A549 (cell line): ENCODE measurements at regions of chrX and their contacts with region 1.

Region 1: DNA sequence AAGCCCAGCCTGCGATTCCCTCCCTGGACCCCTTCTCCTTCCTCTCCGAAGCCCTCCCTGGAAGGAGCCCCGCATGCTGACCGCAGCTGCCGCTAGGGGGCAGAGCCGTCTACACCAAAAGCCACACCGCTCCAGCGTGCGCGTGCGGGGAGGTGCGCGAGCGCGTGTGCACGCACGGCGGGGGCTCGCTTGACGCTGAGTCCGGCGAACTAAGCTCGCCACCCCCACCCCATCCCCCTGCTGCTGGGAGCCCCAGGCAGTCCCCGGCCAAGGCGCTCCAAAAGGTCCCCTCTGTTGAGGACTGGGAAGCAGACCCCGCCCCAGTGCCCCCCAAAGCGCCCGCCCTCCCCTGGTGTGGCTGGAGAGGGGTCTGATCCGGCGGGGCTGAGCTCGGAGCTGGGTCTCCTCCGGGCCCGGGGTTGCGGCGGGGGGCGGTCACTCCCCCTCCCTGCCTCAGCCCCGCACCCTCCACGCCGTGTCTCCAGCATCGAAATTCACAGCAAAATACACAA is 11.0 kb upstream of the CCNQ start:
- DNase-seq: peak; percentile 65 to 74
- ATAC-seq: peak; percentile 90 to 98
- H3K4me3 ChIP-seq: peak overlapping the region; percentile 44
- H3K27ac ChIP-seq: peak overlapping the region; percentile 57 to 89; a peak in 5 of 6 replicates
- H3K4me1 ChIP-seq: peaks cover 6% of the 10 kb centered on the region; the same call in 2 of the 3 replicates
- CTCF ChIP-seq: peak; percentile 69
- EP300 ChIP-seq: no peak
- POLR2A ChIP-seq: no peak
- RAD21 ChIP-seq: peak; percentile 69 to 77

Region 2: DNA sequence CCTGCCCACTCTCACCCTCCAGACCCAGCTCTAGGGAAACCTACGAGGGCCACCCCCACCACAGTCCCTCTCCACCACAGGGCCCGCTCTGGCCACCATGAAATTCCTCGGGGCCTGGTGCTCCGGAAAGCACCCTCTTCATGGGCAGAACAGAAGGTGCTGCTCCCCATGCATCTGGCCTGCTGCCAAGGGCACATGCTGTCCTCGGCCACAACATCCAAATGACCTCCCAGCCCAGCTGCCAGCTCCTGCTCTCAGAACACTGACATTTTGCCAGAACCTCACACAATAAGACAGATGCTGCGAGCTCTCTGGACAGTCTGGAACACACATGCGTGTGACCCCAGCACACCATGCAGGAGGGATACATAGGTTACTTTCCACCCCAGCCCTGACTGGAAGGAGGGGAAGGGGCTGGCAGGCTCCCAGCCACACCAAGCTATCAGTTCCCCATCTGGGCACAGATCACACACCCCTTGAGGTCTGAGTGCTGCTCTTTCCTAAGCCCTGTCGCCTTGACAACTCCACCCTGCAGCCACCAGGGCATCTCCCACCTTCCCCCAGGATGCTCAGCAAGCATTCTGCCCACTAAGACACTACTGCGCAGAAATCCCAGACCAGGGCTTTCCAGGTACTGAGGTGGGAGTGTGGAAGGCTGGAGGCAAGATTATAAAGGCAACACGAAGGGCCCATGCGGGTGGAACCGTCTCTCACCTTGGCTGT is 16.8 kb before region 1 on chrX:
- CTCF ChIA-PET with region 1: interaction called, 10 read pairs
- POLR2A ChIA-PET with region 1: no interaction called
- DNase-seq: no peak
- ATAC-seq: no peak
- H3K4me3 ChIP-seq: no peak overlapping the region
- H3K27ac ChIP-seq: no peak overlapping the region
- H3K4me1 ChIP-seq: peaks cover 11% of the 10 kb centered on the region; the same call in 2 of the 3 replicates
- CTCF ChIP-seq: no peak
- EP300 ChIP-seq: no peak
- POLR2A ChIP-seq: no peak
- RAD21 ChIP-seq: no peak

Region 3: GRCh38 chrX:153627675-153628111 is 17.7 kb after region 1 on chrX:
- CTCF ChIA-PET with region 1: interaction called, 43 read pairs
- POLR2A ChIA-PET with region 1: no interaction called
- DNase-seq: no peak
- ATAC-seq: no peak
- H3K4me3 ChIP-seq: no peak overlapping the region
- H3K27ac ChIP-seq: no peak overlapping the region
- H3K4me1 ChIP-seq: peaks cover 9% of the 10 kb centered on the region
- CTCF ChIP-seq: no peak
- EP300 ChIP-seq: no peak
- POLR2A ChIP-seq: no peak
- RAD21 ChIP-seq: no peak

Region 4: DNA sequence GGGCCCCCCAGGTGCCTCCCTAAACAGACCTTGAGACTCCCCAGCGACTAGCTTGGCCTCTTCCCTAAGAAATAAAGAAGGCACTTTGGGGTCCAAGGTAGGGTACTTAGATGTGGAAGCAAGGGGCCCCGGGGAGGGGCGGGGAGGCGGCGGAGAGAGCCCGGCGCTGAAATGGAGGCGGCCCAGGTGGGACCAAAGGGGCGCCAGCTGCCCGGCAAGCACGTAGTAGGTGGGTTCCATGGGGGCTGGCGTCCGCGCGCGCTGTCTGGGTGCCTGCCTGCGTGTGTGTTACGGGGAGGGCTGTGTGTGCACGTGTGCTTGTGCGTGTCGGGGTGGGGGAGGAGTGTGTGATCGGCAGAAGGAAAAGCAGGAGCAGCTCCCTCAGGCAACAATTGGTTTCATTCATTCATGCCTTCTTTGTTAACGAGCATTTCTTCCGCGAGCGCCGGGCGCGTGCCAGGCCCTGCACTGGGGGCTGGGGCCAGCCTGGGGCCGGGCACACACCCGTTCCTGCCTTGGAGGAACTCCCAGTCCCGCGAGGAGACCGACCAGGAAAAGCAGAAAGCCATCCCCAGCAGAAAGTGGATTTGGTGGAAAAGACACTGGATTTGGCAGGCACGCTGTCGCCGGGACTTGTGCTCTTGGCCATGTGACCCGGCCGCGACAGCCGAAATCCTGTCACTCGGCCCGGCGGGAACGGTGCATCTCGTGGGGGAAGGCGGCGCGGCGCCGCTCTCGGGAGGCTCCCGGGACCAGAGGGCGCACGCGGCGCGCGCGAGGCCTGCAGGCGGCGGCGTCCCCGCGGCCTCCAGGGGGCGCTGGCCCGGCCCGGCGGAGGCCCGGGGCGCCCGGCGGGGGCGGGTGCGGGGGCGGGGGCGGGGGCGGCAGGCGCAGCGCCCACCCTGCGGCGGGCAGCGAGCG is 33.7 kb after region 1 on chrX:
- CTCF ChIA-PET with region 1: interaction called, 12 read pairs
- POLR2A ChIA-PET with region 1: no interaction called
- DNase-seq: peak; percentile 43 to 44
- ATAC-seq: peak; percentile 58 to 61; a peak in 5 of 6 replicates
- H3K4me3 ChIP-seq: peak overlapping the region; percentile 59
- H3K27ac ChIP-seq: peak overlapping the region; percentile 65 to 88
- H3K4me1 ChIP-seq: peaks cover 31% of the 10 kb centered on the region; the same call in 2 of the 3 replicates
- CTCF ChIP-seq: peak; percentile 58
- EP300 ChIP-seq: no peak
- POLR2A ChIP-seq: no peak
- RAD21 ChIP-seq: no peak

Region 5: DNA sequence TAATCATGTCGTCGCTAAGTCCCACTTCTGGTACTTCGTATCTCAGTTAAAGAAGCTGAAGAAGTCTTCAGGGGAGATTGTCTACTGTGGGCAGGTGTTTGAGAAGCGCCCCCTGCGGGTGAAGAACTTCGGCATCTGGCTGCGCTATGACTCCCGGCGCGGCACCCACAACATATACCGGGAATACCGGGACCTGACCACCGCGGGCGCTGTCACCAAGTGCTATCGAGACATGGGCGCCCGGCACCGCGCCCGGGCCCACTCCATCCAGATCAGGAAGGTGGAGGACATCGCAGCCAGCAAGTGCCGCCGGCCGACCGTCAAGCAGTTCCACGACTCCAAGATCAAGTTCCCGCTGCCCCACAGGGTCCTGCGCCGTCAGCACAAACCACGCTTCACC is 52.3 kb after region 1 on chrX:
- CTCF ChIA-PET with region 1: interaction called, 24 read pairs
- POLR2A ChIA-PET with region 1: no interaction called
- DNase-seq: peak in 1 of 2 experiments; percentile 77
- ATAC-seq: peak; percentile 90 to 96
- H3K4me3 ChIP-seq: peak overlapping the region; percentile 22; the same call in 2 of the 3 replicates
- H3K27ac ChIP-seq: peak overlapping the region in 1 of 2 experiments; percentile 57; a peak in 3 of 6 replicates
- H3K4me1 ChIP-seq: no peaks in the 10 kb centered on the region
- CTCF ChIP-seq: peak; percentile 61
- EP300 ChIP-seq: no peak
- POLR2A ChIP-seq: no peak
- RAD21 ChIP-seq: peak; percentile 26 to 41; a peak in 4 of 5 replicates

Region 6: DNA sequence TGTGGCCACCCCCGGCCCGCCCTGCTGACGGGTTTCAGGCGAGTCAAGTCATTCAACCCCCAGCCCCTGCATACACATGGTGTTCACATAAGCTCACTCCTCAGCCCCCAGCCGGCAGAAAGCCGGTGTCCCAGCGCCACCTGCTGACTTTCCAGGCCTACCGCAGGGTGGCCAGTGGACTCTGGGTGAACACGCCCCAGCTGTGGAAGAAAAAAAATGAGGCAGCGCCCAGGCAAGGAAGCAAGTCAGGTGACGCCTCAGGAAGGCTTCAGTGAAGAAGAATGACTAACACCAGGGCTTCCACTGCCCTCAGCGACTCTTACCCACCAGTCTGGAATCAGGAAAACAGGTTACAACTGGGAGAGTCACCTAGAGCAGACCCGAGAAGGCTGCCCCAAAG is 98.4 kb after region 1 on chrX:
- CTCF ChIA-PET with region 1: interaction called, 21 read pairs
- POLR2A ChIA-PET with region 1: no interaction called
- DNase-seq: peak; percentile 73 to 81
- ATAC-seq: peak; percentile 90 to 93
- H3K4me3 ChIP-seq: no peak overlapping the region
- H3K27ac ChIP-seq: peak overlapping the region in 1 of 2 experiments; percentile 35; a peak in 2 of 6 replicates
- H3K4me1 ChIP-seq: peaks cover 11% of the 10 kb centered on the region; the same call in 2 of the 3 replicates
- CTCF ChIP-seq: peak; percentile 63
- EP300 ChIP-seq: no peak
- POLR2A ChIP-seq: no peak
- RAD21 ChIP-seq: peak; percentile 55 to 64